Upper lobe of right lung (tissue), 1 donor: ENCODE measurements at regions of chr13 and their contacts with region 1.

Region 1: DNA sequence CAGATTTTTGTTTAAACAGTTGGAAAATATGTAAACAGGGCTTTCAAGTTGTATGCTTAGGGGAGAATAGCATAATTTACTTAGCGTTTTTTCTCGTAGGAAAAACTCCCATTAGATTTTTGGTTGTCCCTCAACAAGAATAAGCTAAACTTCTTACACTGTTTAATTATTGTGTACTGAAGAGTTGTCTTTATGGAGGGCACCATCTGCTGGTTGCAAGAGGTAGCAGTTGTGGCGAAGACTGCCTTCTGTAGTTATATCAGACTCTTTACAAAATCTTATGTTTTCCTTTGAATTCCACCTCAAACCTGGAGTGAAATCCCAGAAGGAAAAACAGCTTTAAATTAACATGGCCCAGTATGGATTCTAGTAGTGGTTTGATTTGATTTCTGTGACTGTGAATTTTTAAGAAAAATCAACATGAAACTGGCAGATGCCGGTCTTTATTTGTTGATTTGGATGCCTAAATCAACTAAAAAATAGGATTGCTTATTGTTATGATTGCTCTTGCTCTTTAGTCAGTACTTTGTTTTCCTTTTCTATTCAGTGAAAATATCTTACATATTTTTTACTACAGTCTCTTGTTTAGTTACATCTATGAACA is 53.4 kb downstream of the PDS5B start:
- DNase-seq: no peak
- ATAC-seq: peak; percentile 94
- H3K4me3 ChIP-seq: no peak overlapping the region
- H3K27ac ChIP-seq: no peak overlapping the region
- H3K4me1 ChIP-seq: peaks cover 15% of the 10 kb centered on the region
- H3K27me3 ChIP-seq: no peaks in the 10 kb centered on the region
- CTCF ChIP-seq: peak; percentile 82

Region 2: DNA sequence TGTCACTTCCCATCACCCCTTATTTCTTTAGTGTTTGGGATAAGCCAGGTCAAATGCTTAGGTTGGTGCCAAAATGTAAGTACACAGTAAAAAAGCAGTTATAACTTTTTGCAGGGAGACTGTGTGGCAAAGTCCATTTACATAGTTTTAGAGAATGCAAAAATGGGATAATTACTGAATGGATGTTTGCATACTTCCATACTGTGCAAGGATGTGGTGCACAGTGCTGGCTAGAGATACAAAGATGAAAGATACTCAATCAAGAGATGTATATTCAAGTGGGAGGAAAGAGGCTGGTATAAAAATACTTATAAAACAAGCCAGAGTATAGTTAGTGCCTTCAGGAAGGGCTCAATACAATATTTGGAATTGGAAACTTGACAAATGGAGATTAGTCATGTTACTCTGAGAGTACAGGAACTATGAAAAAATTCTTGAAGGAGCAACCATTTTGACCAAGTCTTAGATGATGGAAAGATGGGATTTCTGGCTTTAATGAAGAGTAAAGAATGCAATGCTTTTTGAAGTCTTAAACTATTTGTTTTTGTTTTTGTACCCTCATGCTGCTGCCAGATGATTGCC is 45.4 kb before region 1 on chr13:
- intact Hi-C with region 1: loop called (anchors 10 kb)
- DNase-seq: no peak
- ATAC-seq: no peak
- H3K4me3 ChIP-seq: no peak overlapping the region
- H3K27ac ChIP-seq: no peak overlapping the region
- H3K4me1 ChIP-seq: peaks cover 11% of the 10 kb centered on the region
- H3K27me3 ChIP-seq: no peaks in the 10 kb centered on the region
- CTCF ChIP-seq: no peak

Region 3: GRCh38 chr13:32720026-32720425 is 80.4 kb after region 1 on chr13:
- intact Hi-C with region 1: no loop called
- DNase-seq: no peak
- ATAC-seq: no peak
- H3K4me3 ChIP-seq: no peak overlapping the region
- H3K27ac ChIP-seq: no peak overlapping the region
- H3K4me1 ChIP-seq: no peaks in the 10 kb centered on the region
- H3K27me3 ChIP-seq: no peaks in the 10 kb centered on the region
- CTCF ChIP-seq: no peak